Heart right ventricle (tissue), 16 donors: ENCODE measurements at regions of chr9 and their contacts with region 1.

Region 1: GRCh38 chr9:136093995-136094881 is 851 bp downstream of the NACC2 start:
- DNase-seq: peak; percentile 83 to 85
- ATAC-seq: peak; percentile 53 to 84 (median 74)
- H3K4me3 ChIP-seq: peak overlapping the region; percentile 68 to 94 (median 86)
- H3K27ac ChIP-seq: peak overlapping the region; percentile 93 to 99 (median 96)
- H3K4me1 ChIP-seq: peaks cover 15 to 71% (median 67%) of the 10 kb centered on the region in 9 donors
- H3K27me3 ChIP-seq: peaks cover 0 to 7% (median 0%) of the 10 kb centered on the region in 7 donors
- CTCF ChIP-seq: peak in 3 of 9 donors; percentile 14 to 27 (median 22)

Region 2: DNA sequence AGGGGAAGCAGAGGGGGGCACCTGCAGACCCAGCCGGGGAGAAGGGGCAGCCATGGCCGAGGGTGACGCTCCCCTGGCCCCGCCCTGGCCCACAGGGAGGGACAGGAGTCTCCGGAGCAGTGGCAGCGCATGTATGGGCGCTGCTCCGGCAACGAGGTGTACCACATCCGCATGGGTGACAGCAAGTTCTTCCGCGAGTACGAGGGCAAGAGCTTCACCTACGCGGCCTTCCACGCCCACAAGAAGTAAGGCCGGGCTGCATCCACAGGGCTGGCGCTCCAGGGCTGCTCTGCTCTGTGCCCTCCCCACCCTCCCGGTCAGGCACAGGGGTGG is 324.1 kb before region 1 on chr9:
- intact Hi-C with region 1: no loop called
- DNase-seq: no peak
- ATAC-seq: no peak
- H3K4me3 ChIP-seq: no peak overlapping the region
- H3K27ac ChIP-seq: no peak overlapping the region
- H3K4me1 ChIP-seq: no peaks in the 10 kb centered on the region
- H3K27me3 ChIP-seq: peaks cover 0 to 11% (median 0%) of the 10 kb centered on the region in 7 donors
- CTCF ChIP-seq: no peak

Region 3: DNA sequence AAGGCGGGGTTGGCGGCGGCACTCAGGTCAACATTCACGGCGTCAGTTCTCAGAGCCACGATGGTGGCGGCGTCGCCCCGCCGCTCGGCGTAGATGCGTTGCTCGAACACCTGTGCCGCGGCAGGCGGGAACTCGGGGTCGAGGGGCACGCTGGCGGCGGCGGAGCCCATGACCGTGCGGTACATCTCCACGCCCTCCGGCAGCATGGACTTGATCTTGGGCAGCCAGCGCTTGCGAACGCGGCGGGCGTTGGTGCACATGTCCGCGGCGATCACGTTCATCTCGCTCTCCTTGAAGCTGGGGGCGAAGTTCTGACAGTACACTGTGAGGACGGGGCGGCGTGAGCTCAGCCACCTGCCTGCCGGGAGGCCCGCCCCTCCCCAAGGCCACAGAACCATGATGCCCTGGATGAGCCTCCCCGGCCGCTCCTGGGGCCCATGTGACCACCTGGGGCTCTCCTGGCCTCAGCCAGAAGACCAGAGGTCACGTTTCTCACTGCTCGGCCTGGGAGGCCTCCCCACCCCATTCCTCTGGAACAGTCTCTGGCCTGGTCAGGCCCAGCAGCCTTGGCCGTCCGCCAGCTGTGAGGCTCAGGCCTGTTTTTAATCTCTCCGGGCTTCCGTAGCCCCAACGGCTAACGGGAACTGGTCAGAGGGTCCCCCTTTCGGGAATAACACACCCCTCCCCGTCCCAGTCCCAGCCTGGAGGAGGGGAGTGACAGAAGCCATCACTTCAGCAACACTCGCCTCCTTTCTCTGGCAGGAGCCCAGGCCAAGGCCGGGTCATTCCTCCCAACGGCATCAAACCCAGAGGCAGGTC is 82.3 kb before region 1 on chr9:
- intact Hi-C with region 1: no loop called
- DNase-seq: peak; percentile 88 to 89
- ATAC-seq: peak; percentile 69 to 88 (median 81)
- H3K4me3 ChIP-seq: peak overlapping the region in 5 of 10 donors; percentile 17 to 33 (median 32)
- H3K27ac ChIP-seq: peak overlapping the region; percentile 7 to 90 (median 78)
- H3K4me1 ChIP-seq: peaks cover 7 to 62% (median 28%) of the 10 kb centered on the region in 9 donors
- H3K27me3 ChIP-seq: no peaks in the 10 kb centered on the region
- CTCF ChIP-seq: no peak

Region 4: DNA sequence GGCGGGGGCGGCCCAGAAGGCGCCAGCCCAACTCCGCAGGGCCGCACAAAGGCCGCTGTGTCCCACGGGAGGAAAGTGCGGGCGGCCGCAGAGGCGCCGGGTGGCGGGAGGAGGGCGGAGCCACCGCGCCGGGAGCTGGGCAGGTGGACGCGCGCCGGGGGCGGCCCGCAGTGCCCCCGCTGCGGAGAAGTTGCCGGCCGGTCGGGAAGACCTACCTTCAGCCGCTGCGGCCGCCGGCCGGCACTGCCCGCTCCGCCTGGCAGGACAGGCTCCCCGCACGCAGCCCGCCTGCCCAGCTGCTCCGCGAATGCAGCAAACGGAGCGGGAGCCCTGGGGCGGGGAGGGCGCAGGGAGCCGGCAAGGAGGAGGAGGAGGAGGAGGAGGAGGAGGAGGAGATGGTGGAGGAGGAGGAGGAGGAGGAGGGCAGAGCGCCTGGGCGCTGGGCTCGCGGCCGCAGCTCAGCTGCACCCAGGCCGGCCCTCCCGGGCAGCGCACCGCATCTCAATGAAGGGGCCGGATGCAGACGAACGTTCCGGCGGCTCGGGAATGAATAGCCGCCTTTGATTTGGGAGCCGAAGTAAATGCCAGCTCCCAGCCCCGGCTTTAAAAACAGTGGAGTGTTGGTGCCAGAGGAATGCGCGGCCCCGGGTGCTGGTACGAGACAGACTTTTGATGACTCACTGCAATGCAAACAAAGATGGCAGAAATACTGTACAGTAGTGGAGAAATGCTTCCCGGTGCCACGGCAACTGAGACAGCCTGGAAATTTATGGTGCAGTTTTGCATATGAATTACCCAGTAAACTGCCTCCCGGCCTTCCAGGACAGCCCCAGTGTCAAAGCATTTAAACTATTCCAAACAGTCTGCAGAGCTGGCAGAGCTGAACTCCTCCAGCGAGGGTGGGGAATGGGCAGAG is 42.5 kb before region 1 on chr9:
- intact Hi-C with region 1: loop called in 2 of 10 experiments (anchors 5 kb)
- DNase-seq: peak; percentile 35 to 52
- ATAC-seq: peak; percentile 15 to 70 (median 48)
- H3K4me3 ChIP-seq: peak overlapping the region; percentile 16 to 62 (median 54)
- H3K27ac ChIP-seq: peak overlapping the region in 9 of 10 donors; percentile 57 to 88 (median 78)
- H3K4me1 ChIP-seq: peaks cover 26 to 80% (median 73%) of the 10 kb centered on the region in 9 donors
- H3K27me3 ChIP-seq: no peaks in the 10 kb centered on the region
- CTCF ChIP-seq: no peak

Region 5: DNA sequence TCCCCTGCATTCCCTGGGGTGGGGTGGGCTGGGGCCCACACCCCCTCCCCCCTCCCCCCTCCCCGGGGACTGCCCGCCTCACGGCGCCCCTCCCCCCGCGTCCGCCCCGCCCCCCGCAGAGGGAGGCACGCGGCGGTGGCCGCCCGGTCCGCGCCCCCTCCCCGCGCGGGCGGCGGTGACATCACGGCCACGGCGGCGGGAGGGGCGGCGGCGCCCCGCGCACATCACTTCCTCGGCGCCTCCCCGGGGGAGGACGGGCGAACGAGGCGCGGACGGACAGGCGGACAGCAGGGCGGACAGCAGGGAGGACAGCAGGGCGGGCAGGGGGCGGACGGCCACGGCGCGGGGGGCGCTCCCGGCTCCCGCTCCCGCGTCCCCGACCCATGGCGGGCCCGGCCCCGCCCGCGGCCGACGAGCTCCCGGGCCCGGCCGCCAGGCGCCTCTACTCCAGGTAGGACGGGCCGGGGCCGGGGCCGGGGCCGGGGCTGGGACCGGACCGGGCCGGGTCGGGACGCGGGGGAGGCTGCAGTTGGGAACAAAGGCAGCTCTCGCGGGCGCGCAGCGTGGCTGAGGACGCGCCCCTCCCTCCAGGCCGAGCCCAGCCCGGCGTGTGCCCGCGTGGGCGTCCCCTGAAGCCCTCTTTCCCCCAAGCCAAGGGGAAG is 233.2 kb after region 1 on chr9 and contains the start of gene GPSM1:
- intact Hi-C with region 1: no loop called
- DNase-seq: peak; percentile 66 to 73
- ATAC-seq: peak; percentile 2 to 54 (median 27)
- H3K4me3 ChIP-seq: peak within 1 kb of the TSS; percentile 55 to 91 (median 74)
- H3K27ac ChIP-seq: peak within 1 kb of the TSS; percentile 18 to 86 (median 83)
- H3K4me1 ChIP-seq: peaks cover 24 to 56% (median 39%) of the 10 kb centered on the region in 9 donors
- H3K27me3 ChIP-seq: peaks cover 0 to 23% (median 0%) of the 10 kb centered on the region in 7 donors
- CTCF ChIP-seq: no peak
- total RNA-seq, gene GPSM1: 19.4 to 50.2 (median 24.8) TPM